KBM-7 (cell line): ENCODE measurements at regions of chr4 and their contacts with region 1.

Region 1: DNA sequence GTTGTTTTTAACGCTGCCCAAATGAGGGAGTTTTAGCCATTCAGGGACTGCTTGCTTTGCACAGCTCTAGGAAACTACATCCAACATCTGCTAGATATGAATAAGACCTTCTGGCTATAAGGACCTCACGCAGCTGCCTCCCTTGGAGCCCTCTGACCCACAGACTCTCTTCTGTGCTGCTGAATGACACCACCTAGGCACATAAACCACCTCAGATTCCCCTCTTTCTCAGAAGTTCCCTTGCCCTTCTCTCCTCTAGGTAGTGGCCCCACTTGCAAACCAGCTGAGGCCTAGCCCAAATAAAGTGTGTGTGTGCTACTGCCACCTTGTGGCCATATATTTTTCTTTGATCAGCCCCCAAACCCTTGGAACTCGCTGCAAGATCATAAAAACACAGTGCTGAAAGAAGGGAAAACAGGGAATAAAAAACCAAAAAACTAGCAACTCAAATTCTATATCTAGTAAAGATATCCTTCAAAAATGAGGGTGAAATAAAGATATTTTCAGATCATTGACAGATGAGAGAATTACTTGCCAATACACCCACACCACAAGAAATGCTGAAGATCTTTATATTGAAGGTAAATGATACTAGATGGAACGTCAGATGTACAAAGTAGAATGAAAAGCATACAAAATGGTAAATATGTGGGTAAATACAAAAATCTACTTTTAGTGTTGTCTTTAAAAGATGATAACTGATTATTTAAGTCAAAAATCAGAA is 265.9 kb downstream of the ADAMTS3 start:
- DNase-seq: peak; percentile 77

Region 2: GRCh38 chr4:72055566-72055965 is 247.6 kb before region 1 on chr4:
- in situ Hi-C with region 1: no loop called
- DNase-seq: no peak

Region 3: DNA sequence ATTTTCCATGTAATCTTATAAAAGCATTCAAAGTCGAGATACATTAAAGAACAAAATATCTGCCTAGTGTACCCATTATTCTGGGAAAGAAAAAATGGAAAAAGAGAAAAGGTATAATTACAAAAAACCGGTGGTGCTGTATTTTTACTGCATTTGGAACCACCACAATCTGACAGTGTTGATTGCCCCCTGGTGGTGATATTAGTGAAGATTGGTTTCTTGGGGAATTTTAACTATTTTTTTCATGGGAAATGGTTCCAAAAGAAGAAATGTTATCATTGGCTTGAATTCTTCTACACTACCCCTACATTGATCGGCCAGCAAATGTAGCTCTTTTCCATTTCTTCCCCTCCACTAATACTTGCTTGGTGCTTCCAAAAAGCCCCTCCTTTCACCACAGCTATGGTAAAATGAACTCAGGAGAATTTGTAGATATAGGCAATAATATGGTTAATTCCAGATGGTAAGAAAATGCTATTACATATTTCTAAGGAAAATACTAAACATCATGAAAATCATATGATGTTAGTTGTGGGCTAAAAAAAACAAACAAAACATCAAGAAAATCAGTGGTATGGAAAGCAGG is 716.4 kb after region 1 on chr4:
- in situ Hi-C with region 1: loop called (anchors 25 kb)
- DNase-seq: peak; percentile 55